ENCODE measurements at regions of chr11 and their contacts with region 1.

Region 1: GRCh38 chr11:74492974-74493790 is at the start of gene LIPT2:
- DNase-seq: peak; percentile 93 to 99 (median 97)
- ATAC-seq: peak; percentile 95
- H3K4me3 ChIP-seq: peak within 1 kb of the TSS; percentile 54 to 97
- H3K4me3 Mint-ChIP-seq: peak within 1 kb of the TSS; percentile 88
- H3K27ac ChIP-seq: peak within 1 kb of the TSS; percentile 53 to 96
- H3K27ac Mint-ChIP-seq: peak within 1 kb of the TSS; percentile 87
- H3K4me1 ChIP-seq: peaks cover 12% of the 10 kb centered on the region
- H3K4me1 Mint-ChIP-seq: peaks cover 18% of the 10 kb centered on the region
- H3K27me3 ChIP-seq: no peaks in the 10 kb centered on the region
- H3K27me3 Mint-ChIP-seq: no peaks in the 10 kb centered on the region
- CTCF ChIP-seq: no peak
- total RNA-seq, gene LIPT2: 8.7 to 9.4 TPM

Region 2: DNA sequence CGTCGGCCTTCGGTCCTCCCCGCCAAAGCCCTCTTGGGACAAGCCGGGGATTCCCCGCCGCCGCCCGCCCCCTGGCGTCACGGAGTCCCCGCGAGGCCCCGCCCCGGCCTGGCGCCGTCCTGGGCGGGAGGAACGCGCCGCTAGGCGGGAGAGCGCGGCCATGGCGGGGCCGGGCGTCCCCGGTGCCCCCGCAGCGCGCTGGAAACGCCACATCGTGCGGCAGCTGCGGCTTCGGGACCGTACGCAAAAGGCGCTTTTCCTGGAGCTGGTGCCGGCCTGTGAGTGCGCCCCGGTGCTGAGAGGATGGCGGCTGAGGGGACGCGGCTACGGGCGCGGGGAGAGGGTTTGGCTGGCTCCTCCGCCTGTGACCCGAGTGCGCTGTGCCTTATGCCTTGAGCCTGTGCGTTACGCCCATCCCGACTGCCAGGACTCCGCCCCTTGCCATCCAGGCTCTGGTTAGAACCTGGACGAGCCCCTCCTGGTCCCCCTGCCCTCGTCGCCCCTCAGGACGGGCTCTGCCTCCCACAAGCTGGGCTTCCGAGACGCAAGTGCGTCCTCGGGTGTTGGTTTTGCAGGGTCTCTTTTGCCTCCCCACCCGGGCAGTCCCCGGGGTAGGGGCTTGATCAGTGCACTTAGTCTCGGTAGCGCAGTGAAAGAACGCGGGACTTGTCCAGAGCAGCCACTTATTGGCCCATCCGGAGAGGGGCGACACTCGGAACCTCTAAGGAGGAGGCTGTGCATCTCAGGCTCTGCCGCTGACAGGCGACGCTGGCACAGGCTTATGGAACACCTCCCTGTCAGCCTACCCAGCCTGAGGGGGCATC is 1678.7 kb before region 1 on chr11 and contains the start of gene ATG16L2:
- CTCF ChIA-PET with region 1: no interaction called
- POLR2A ChIA-PET with region 1: no interaction called
- intact Hi-C with region 1: loop called in 1 of 2 experiments (anchors 5 kb)
- DNase-seq: peak; percentile 83 to 96 (median 88)
- ATAC-seq: peak; percentile 78
- H3K4me3 ChIP-seq: peak within 1 kb of the TSS; percentile 97 to 98
- H3K4me3 Mint-ChIP-seq: peak within 1 kb of the TSS; percentile 99
- H3K27ac ChIP-seq: peak within 1 kb of the TSS; percentile 99 to 100
- H3K27ac Mint-ChIP-seq: peak within 1 kb of the TSS; percentile 99
- H3K4me1 ChIP-seq: peaks cover 26% of the 10 kb centered on the region
- H3K4me1 Mint-ChIP-seq: peaks cover 48% of the 10 kb centered on the region
- H3K27me3 ChIP-seq: no peaks in the 10 kb centered on the region
- H3K27me3 Mint-ChIP-seq: no peaks in the 10 kb centered on the region
- CTCF ChIP-seq: peak; percentile 20
- total RNA-seq, gene ATG16L2: 45.7 to 52.8 TPM

Region 3: DNA sequence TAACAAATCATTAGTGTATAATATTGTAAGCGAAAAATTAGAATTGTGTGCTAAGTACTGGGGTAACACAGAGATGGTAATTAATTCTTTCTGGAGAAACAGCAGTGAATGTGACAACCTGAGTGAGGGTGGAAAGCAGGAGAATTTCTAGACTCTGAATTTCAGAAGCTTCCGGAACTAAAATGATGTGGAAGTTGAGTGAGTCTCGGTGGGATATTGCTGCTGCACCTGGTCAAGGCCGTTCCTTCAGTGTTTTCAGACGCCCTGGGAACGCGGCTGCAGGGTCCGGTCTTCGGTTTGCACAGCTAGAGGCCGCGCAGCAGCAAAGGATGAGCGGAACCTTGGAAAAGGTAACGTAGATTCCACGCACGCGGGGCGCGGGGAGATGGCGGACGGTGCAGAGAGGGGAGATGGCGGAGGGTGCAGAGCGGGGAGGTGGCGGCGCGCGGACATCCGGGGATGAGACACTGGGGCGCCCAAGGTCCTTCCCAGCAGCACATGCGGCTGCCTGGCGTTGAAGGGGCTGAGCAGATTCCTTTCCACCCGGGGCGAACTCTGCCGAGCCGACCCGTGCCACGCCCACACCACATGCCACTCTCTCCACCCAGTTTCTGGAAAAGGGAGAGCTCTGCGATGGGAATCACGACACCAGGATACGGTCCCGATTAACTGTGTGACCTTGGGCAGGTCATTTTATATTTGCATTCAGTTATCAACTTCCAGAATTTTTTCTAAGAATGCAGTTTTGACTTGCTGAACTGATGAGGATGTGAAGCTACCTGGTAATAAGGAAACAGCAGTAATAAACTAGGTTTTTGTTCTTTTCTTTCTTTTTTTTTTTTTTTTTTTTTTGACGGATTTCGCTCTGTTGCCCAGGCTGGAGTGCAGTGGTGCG is 705.3 kb before region 1 on chr11 and contains the start of gene MRPL48:
- CTCF ChIA-PET with region 1: no interaction called
- POLR2A ChIA-PET with region 1: no interaction called
- intact Hi-C with region 1: loop called (anchors 2 to 10 kb)
- DNase-seq: peak; percentile 75 to 93 (median 88)
- ATAC-seq: peak; percentile 100
- H3K4me3 ChIP-seq: peak within 1 kb of the TSS; percentile 87 to 89
- H3K4me3 Mint-ChIP-seq: peak within 1 kb of the TSS; percentile 100
- H3K27ac ChIP-seq: peak within 1 kb of the TSS; percentile 77 to 82
- H3K27ac Mint-ChIP-seq: peak within 1 kb of the TSS; percentile 99
- H3K4me1 ChIP-seq: peaks cover 4% of the 10 kb centered on the region
- H3K4me1 Mint-ChIP-seq: peaks cover 33% of the 10 kb centered on the region
- H3K27me3 ChIP-seq: no peaks in the 10 kb centered on the region
- H3K27me3 Mint-ChIP-seq: no peaks in the 10 kb centered on the region
- CTCF ChIP-seq: no peak
- total RNA-seq, gene MRPL48: 10.2 to 13.7 TPM

Region 4: DNA sequence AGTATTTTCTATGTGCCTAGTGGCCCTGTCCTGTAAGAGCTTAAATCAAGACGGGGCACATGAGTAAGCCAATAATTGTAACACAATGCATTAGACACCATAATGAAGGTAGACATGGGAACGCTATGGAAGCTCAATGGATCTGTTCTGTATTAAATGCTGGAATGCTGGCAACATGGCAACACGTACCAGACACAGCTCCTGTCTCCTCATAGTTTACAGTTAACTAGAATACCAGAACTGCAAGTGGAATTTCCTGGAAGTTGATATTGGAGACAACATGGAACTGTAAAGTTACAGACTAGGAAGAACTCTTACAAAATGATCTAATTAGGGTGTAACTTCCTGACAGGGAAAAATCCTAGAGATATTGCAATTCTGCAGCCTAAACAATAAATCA is 194.2 kb before region 1 on chr11:
- CTCF ChIA-PET with region 1: no interaction called
- POLR2A ChIA-PET with region 1: no interaction called
- intact Hi-C with region 1: no loop called
- DNase-seq: no peak
- ATAC-seq: no peak
- H3K4me3 ChIP-seq: no peak overlapping the region
- H3K4me3 Mint-ChIP-seq: no peak overlapping the region
- H3K27ac ChIP-seq: no peak overlapping the region
- H3K27ac Mint-ChIP-seq: no peak overlapping the region
- H3K4me1 ChIP-seq: no peaks in the 10 kb centered on the region
- H3K4me1 Mint-ChIP-seq: peaks cover 5% of the 10 kb centered on the region
- H3K27me3 ChIP-seq: no peaks in the 10 kb centered on the region
- H3K27me3 Mint-ChIP-seq: peaks cover 26% of the 10 kb centered on the region
- CTCF ChIP-seq: no peak

Region 5: GRCh38 chr11:74474316-74474715 is 18.9 kb before region 1 on chr11:
- CTCF ChIA-PET with region 1: no interaction called
- POLR2A ChIA-PET with region 1: interaction called, 11 read pairs
- intact Hi-C with region 1: no loop called
- DNase-seq: no peak
- ATAC-seq: no peak
- H3K4me3 ChIP-seq: no peak overlapping the region
- H3K4me3 Mint-ChIP-seq: no peak overlapping the region
- H3K27ac ChIP-seq: no peak overlapping the region
- H3K27ac Mint-ChIP-seq: no peak overlapping the region
- H3K4me1 ChIP-seq: no peaks in the 10 kb centered on the region
- H3K4me1 Mint-ChIP-seq: no peaks in the 10 kb centered on the region
- H3K27me3 ChIP-seq: no peaks in the 10 kb centered on the region
- H3K27me3 Mint-ChIP-seq: peaks cover 13% of the 10 kb centered on the region
- CTCF ChIP-seq: no peak

Region 6: DNA sequence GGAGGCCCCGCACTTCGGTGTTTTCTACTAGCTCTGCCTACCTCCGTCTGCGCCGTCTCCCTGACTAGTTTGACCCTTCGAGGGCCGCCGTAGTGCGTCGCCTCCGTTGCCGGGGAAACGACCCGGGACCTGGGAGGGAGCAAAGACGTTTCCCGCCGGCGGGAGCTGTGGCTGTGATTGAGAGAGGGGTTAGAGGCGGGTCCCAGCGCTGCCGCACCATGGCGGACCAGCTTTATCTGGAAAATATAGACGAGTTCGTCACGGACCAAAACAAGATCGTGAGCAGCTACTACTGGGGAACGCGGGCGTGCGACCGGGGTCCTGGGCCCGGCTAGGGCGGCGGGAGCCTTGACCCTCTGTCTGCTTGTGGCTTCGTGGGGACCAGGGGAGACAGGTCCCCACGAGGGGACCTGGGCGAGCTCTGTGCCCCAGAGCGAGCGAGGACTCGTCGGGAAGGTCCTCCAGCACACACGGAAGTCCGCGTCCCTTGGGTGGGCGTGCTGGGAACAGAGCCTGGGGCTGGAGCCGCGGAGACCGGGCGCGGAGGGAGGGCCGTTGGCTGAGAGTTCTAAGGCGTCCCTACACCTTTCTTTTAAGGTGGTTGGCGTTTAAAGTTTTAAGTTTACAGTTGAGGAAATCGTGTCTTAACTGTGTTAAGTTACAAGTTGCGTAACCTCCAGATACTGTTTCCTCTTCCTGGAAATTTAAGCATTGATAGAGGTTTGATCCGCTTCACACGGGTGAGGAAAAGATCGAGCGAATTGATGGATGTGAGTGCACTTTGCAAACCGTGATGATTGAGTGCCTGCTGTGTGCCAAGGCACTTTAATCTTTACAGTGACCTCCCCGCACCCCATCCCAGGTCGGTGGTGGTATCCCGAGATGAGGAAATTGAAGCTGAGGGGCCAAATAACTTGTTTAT is 99.5 kb after region 1 on chr11 and contains the start of gene POLD3:
- CTCF ChIA-PET with region 1: no interaction called
- POLR2A ChIA-PET with region 1: interaction called, 30 read pairs
- intact Hi-C with region 1: loop called (anchors 1 to 2 kb)
- DNase-seq: peak; percentile 88 to 96 (median 92)
- ATAC-seq: peak; percentile 94
- H3K4me3 ChIP-seq: peak within 1 kb of the TSS; percentile 88 to 100
- H3K4me3 Mint-ChIP-seq: peak within 1 kb of the TSS; percentile 99
- H3K27ac ChIP-seq: peak within 1 kb of the TSS; percentile 82 to 91
- H3K27ac Mint-ChIP-seq: peak within 1 kb of the TSS; percentile 97
- H3K4me1 ChIP-seq: peaks cover 11% of the 10 kb centered on the region
- H3K4me1 Mint-ChIP-seq: peaks cover 19% of the 10 kb centered on the region
- H3K27me3 ChIP-seq: no peaks in the 10 kb centered on the region
- H3K27me3 Mint-ChIP-seq: no peaks in the 10 kb centered on the region
- CTCF ChIP-seq: no peak
- total RNA-seq, gene POLD3: 4.0 TPM

Region 7: DNA sequence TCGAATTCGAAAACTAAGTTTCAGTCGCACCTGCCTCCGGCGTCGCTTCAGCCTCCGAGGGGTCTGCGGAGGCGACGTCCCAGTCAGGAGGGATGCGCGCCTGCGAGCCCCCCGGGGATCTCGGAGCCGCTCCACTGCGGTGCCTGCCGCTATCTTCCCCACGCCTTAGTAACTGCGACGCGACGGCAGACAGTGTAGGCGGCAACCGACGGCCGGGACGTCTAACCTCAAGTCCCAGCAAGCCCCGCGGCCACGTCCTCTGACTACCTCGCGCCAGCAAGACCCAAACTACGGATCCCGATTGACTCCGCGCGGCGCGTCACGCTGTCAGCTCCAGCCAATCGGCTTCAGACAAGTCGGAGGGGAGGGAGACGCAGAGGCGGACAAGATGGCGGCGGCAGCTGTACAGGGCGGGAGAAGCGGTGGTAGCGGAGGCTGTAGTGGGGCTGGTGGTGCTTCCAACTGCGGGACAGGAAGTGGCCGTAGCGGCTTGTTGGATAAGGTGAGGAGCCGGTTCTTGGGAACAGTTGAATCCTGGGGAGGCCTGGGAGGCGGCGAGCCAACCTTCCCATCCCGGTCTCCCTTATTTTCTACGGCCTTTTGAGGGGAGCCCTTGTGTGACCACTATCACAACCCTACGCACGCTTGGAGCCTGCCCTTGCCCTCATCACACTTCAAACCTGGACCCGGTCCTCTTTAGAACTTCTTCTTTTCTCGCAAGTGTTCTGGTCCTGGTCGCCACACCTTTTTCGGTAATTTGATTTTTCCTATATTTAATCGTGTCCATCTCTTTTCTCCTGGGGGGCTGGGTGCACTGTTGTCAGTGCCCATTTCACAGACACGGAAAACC is 455.9 kb after region 1 on chr11 and contains the starts of genes SPCS2 and XRRA1:
- CTCF ChIA-PET with region 1: no interaction called
- POLR2A ChIA-PET with region 1: no interaction called
- intact Hi-C with region 1: loop called (anchors 2 to 5 kb)
- DNase-seq: peak; percentile 95 to 99 (median 97)
- ATAC-seq: peak; percentile 95
- H3K4me3 ChIP-seq: peak within 1 kb of the TSS; percentile 86 to 90
- H3K4me3 Mint-ChIP-seq: peak within 1 kb of the TSS; percentile 92
- H3K27ac ChIP-seq: peak within 1 kb of the TSS; percentile 80 to 88
- H3K27ac Mint-ChIP-seq: peak within 1 kb of the TSS; percentile 95
- H3K4me1 ChIP-seq: peaks cover 31% of the 10 kb centered on the region
- H3K4me1 Mint-ChIP-seq: peaks cover 63% of the 10 kb centered on the region
- H3K27me3 ChIP-seq: no peaks in the 10 kb centered on the region
- H3K27me3 Mint-ChIP-seq: no peaks in the 10 kb centered on the region
- CTCF ChIP-seq: no peak
- total RNA-seq, gene SPCS2: 38.1 to 42.3 TPM
- total RNA-seq, gene XRRA1: 19.2 to 20.9 TPM

Region 8: DNA sequence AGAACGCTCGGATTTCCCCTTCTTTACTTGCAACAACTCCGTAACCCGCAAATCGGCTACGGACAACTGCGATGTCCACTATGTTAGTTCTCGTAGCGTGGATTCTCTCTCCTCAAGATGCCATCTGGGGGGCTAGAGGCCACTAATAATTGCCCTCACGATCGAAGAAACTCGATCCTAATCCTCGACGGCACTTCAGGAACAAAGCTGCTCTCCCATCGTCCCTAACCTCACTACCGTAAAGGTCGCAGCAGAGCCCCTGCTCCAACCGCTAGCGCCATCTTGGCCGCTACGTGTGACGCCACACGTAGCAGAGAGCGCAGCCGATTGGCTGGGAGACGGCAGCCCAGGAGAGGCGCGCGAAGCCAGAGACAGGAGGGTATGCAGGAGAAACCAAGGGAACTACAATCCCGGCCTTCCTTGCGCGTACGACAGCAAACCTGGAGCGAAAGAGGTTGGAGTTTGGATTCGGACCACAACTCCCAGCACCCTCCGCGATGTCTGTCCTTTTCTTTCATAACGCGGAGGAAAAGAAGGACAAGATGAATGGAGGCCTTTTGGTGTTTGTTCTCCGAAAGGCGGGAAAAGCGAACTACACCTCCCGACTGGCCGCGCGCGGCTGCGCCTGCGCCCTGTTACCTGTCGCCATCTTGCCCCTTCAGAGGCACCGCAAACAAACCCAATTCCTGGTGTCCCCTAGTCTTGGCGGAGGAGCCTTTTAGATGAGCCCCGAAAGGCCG is 1951.4 kb after region 1 on chr11 and contains the start of gene EMSY:
- CTCF ChIA-PET with region 1: no interaction called
- POLR2A ChIA-PET with region 1: no interaction called
- intact Hi-C with region 1: loop called in 1 of 2 experiments (anchors 5 kb)
- DNase-seq: peak; percentile 77 to 97 (median 90)
- ATAC-seq: peak; percentile 91
- H3K4me3 ChIP-seq: peak within 1 kb of the TSS; percentile 58 to 100
- H3K4me3 Mint-ChIP-seq: peak within 1 kb of the TSS; percentile 94
- H3K27ac ChIP-seq: peak within 1 kb of the TSS; percentile 70 to 97
- H3K27ac Mint-ChIP-seq: peak within 1 kb of the TSS; percentile 96
- H3K4me1 ChIP-seq: peaks cover 20% of the 10 kb centered on the region
- H3K4me1 Mint-ChIP-seq: peaks cover 38% of the 10 kb centered on the region
- H3K27me3 ChIP-seq: no peaks in the 10 kb centered on the region
- H3K27me3 Mint-ChIP-seq: no peaks in the 10 kb centered on the region
- CTCF ChIP-seq: no peak
- total RNA-seq, gene EMSY: 19.8 to 20.7 TPM

Measured in CD8-positive, alpha-beta T cell (primary cell).